ENCODE measurements at regions of chr12 and their contacts with region 1.

Region 1: GRCh38 chr12:108547686-108548085 is 13.3 kb downstream of the SART3 start:
- DNase-seq: no peak
- ATAC-seq: no peak
- H3K4me3 ChIP-seq: no peak overlapping the region
- H3K27ac ChIP-seq: no peak overlapping the region
- H3K4me1 ChIP-seq: no peaks in the 10 kb centered on the region
- CTCF ChIP-seq: no peak
- EP300 ChIP-seq: no peak
- POLR2A ChIP-seq: no peak
- RAD21 ChIP-seq: no peak

Region 2: DNA sequence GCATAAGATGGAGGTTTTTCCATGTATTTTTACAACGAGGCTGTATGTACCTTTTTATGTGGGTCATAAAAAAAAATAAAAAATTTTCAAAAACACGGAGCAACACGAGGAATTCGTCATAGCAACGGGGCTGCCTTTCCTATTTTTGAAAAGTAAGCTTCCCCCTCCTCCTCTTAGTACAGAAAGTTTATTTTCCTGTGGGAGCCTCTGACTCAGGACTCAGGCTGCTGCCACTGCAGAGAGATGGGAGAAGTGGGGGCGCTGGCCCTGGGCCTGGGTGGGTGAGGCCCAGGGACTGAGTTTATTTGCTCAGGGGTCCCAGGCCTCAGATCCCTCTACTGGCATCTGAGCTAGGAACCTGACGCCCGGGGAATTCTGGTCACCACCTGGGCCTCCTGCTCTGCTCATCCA is 198.4 kb before region 1 on chr12:
- CTCF ChIA-PET with region 1: no interaction called
- POLR2A ChIA-PET with region 1: no interaction called
- DNase-seq: no peak
- ATAC-seq: peak in 1 of 2 experiments; percentile 43; a peak in 3 of 6 replicates
- H3K4me3 ChIP-seq: no peak overlapping the region
- H3K27ac ChIP-seq: no peak overlapping the region
- H3K4me1 ChIP-seq: no peaks in the 10 kb centered on the region
- CTCF ChIP-seq: no peak
- EP300 ChIP-seq: no peak
- POLR2A ChIP-seq: no peak
- RAD21 ChIP-seq: no peak

Region 3: DNA sequence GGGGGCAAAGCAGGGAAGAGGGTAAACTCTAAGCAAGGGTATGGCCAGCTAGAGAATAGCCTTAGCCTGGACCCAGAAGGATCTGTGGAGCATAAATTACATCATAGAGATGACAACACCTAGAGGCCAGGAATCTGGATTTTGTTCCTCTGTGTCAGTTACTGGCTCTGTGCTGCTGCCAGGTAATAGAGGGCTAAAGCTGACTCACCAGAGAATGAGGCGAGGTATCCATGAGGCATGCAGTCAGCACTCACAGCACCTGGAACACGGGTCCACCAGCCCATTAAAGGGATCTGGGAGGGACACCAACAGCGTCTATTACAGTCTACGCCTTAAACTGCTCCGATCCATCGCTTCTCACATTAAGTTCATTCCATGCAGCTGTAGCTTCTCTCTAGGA is 133.7 kb before region 1 on chr12:
- CTCF ChIA-PET with region 1: no interaction called
- POLR2A ChIA-PET with region 1: no interaction called
- DNase-seq: no peak
- ATAC-seq: no peak
- H3K4me3 ChIP-seq: no peak overlapping the region
- H3K27ac ChIP-seq: no peak overlapping the region
- H3K4me1 ChIP-seq: no peaks in the 10 kb centered on the region
- CTCF ChIP-seq: no peak
- EP300 ChIP-seq: no peak
- POLR2A ChIP-seq: no peak
- RAD21 ChIP-seq: no peak

Region 4: DNA sequence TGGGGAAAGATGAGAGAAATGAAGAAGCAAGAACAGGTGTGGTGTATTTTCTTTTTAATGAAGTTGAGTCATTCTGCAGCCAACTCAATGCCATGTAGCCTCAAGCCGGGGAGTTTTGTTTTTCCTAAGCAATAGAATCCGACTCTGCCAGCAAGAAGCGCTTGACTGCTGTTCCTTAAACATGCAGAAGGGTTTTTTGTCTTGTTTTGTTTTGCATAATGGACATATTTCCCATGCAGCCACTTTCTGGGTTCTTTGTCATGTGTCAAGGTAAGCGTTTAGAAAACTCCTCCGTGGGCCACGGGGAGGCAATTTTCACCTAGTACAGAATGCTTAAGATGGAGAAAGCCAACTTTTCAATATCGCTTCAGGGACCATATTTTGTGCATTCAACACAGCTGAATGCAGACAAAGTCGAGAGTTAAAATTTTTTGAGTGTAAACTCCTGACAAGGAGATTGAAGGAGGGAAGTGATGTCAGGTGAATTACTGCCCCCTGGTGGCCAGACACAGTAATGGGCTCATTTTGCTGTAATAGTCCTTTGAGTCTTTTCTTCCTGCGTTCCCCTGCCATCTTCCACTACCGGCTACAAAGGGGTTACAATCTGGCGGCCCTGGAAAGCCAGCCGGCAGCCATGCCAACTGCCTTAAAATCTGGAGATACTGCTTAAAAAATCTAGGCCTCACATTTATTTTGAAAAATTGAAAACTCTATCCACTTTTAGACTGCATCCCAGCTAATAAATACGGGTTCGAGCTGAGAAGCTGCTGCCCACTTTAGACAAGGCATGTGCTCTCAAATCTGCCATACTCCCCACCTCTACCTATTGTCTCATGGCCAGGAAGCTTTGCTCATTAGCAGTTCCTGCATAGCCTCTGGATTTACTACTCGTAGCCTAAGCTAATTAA is 35.8 kb before region 1 on chr12:
- CTCF ChIA-PET with region 1: no interaction called
- POLR2A ChIA-PET with region 1: no interaction called
- DNase-seq: peak; percentile 67 to 79
- ATAC-seq: peak in 1 of 2 experiments; percentile 5; a peak in 1 of 6 replicates
- H3K4me3 ChIP-seq: 0 out of 3 replicates have a peak overlapping the region, but pooled peaks have one; percentile 10
- H3K27ac ChIP-seq: no peak overlapping the region
- H3K4me1 ChIP-seq: no peaks in the 10 kb centered on the region; the same call in 2 of the 3 replicates
- CTCF ChIP-seq: peak; percentile 91
- EP300 ChIP-seq: no peak
- POLR2A ChIP-seq: no peak
- RAD21 ChIP-seq: peak; percentile 75 to 85

Region 5: GRCh38 chr12:108531929-108532848 is 15.5 kb before region 1 on chr12:
- CTCF ChIA-PET with region 1: interaction called, 10 read pairs
- POLR2A ChIA-PET with region 1: no interaction called
- DNase-seq: no peak
- ATAC-seq: peak in 1 of 2 experiments; percentile 47; a peak in 2 of 6 replicates
- H3K4me3 ChIP-seq: no peak overlapping the region
- H3K27ac ChIP-seq: no peak overlapping the region
- H3K4me1 ChIP-seq: no peaks in the 10 kb centered on the region
- CTCF ChIP-seq: no peak
- EP300 ChIP-seq: no peak
- POLR2A ChIP-seq: no peak
- RAD21 ChIP-seq: no peak

Region 6: DNA sequence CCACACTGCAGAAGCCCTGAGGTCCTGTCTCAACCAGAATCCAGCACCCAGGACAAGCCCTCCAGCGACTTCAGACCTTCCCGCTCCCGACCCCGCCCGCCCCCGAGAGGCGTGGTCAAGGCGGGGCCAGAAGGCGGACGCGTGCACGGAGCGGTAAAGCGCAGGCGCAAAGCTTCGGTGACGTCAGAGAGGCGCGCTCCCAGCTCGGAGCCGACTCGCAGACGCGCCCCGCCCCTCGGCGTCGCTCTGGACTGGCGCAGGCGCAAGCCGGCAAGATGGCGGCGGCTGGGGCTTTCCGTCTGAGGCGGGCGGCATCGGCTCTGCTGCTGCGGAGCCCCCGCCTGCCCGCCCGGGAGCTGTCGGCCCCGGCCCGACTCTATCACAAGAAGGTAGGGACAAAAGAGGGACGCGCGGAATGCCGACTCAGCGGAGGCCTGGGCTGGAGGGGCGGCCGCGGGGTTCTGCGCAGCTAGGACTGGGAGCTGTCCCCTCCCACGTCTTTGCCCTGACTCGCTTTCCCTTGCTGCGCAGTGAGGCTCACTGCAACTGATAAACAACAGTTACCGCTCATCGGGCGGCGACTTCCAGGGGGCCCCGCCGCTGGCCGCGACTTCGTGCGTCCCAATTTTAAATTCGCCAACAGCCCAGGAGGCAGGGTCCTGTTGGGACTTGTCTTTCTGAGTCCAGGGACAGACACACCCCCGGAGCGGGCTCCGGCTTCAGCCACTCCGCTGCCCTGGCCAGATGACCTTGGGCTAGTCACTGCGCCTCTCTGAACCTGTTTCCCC is 14.9 kb after region 1 on chr12 and contains the start of gene ISCU:
- CTCF ChIA-PET with region 1: interaction called, 10 read pairs
- POLR2A ChIA-PET with region 1: no interaction called
- DNase-seq: peak; percentile 93 to 99
- ATAC-seq: peak; percentile 72 to 87
- H3K4me3 ChIP-seq: peak within 1 kb of the TSS; percentile 82
- H3K27ac ChIP-seq: peak within 1 kb of the TSS; percentile 91 to 95
- H3K4me1 ChIP-seq: peaks cover 37% of the 10 kb centered on the region
- CTCF ChIP-seq: no peak
- EP300 ChIP-seq: no peak
- POLR2A ChIP-seq: peak; percentile 97
- RAD21 ChIP-seq: no peak
- polyA plus RNA-seq, gene ISCU: 174 and 177 TPM in 2 replicates

Region 7: DNA sequence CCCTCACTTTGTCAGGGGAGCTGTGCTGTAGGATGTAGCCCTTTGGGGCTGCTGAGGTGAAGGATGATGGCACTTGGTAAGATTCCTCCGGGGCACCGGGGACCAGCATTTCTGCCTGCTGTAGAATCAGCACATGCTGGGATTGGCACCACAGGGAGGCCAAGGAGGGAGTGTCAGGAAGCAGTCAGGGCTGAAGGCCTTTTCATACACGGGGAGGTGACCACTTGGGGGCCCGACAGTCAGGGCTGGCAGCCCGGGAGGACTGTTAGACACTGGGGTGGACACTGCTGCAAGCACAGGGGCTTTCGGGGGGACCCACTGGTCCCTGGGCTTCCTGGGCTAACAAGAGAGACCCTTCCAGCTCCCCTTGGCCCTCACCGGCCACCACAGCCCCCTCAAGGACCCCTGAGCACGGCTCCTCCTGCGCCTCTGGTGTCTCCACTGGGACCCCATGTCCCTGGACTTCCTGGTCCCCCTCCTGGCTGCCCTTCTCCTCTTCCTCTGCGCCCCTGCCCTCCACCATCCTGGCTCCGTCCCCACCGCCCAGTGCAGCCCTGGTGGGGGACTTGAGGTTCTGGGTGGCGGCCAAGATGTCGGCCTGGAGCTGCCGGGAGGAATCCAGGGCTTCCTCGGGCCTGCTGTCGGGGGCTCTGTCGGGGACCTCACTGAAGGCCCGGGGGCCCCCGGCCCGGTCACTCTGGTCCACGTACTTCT is 43.7 kb after region 1 on chr12:
- CTCF ChIA-PET with region 1: no interaction called
- POLR2A ChIA-PET with region 1: no interaction called
- DNase-seq: no peak
- ATAC-seq: no peak
- H3K4me3 ChIP-seq: no peak overlapping the region
- H3K27ac ChIP-seq: no peak overlapping the region
- H3K4me1 ChIP-seq: no peaks in the 10 kb centered on the region
- CTCF ChIP-seq: no peak
- EP300 ChIP-seq: no peak
- POLR2A ChIP-seq: no peak
- RAD21 ChIP-seq: no peak